Mammary epithelial cell (primary cell): ENCODE measurements at regions of chr1 and their contacts with region 1.

Region 1: DNA sequence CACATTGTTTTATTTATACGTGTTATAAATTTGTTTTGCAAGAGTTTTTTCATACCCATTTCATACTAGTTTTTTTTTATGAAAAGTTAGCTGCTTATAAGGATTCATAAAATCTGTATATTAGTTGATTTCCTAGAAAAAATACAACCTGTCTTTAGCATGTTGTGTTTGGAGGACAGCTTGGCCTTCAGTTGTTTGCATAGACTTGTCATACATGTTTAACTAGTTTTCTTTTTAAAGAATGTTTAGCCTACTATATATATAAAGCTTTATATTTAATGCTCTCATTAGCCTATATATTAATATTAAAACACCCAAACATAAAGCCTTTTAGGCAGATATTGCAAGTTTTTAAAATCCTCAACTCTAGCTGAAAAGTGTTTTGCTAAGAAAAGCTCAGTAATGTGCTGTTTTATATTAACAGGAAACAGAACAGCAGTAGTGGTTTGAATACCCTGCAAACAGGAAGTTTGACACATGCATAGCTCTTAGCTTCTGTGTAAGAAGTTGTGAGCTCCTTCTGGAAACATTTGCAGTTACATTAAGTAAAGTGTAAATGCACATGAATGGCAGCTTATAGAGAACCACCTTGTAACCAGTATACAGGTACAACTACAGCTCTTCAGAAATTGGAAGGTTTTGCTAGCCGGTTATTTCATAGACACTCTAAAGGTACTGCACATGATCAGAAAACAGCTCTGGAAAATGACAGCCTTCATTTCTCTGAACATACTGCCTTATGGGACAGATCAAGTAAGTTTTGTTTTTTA is at the start of gene PRKACB:
- DNase-seq: peak; percentile 27
- H3K4me3 ChIP-seq: no peak within 1 kb of the TSS
- H3K27ac ChIP-seq: no peak within 1 kb of the TSS
- H3K4me1 ChIP-seq: peaks cover 17% of the 10 kb centered on the region
- H3K27me3 ChIP-seq: no peaks in the 10 kb centered on the region
- CTCF ChIP-seq: no peak
- total RNA-seq, gene PRKACB: 25.3 to 29.0 TPM

Region 2: GRCh38 chr1:84192681-84193080 is 48.7 kb after region 1 on chr1:
- CTCF ChIA-PET with region 1: interaction called, 4 read pairs
- dilution Hi-C with region 1: no loop called
- in situ Hi-C with region 1: no loop called
- intact Hi-C with region 1: loop called (anchors 5 kb)
- DNase-seq: no peak
- H3K4me3 ChIP-seq: no peak overlapping the region
- H3K27ac ChIP-seq: no peak overlapping the region
- H3K4me1 ChIP-seq: no peaks in the 10 kb centered on the region
- H3K27me3 ChIP-seq: no peaks in the 10 kb centered on the region
- CTCF ChIP-seq: no peak